ENCODE measurements at regions of chr13 and their contacts with region 1.

Region 1: DNA sequence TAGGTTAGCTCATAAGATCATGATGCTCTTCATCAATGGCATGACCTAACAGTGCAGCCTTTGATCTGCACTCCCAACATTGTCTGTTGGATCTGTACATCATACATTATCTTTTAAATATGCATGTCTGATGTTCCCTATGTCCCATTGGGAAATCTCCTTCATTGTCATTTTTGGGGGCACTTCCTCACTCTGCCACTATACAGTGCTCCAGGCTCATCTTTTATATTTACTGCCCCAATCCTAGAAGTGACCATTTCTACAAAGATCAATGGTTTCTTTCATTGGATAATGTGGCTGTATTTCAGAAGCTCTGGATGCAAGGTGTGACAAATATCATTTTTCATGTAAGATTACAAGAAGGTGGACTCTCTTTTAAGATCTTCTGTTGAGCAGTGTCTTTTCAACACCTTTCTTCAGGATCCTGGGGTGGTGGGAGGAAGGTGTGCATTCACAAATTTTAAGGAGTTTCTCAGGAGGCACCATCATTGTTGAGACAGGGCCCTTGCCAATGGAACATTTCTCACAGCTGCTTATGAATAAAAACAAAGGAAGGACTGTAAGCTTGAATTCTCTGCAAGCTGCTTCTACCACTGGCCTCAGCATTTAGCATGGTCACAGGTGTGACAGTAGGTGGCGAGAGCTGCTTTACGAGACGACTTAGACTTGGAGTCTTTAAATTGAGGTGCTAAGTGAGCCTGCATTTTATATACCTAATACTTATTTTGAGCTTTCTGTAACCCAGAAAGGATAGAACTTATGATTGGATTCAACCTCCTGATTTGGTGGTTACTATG is 403.0 kb downstream of the LMO7 start:
- DNase-seq: no peak
- H3K4me3 ChIP-seq: no peak overlapping the region
- H3K4me3 Mint-ChIP-seq: no peak overlapping the region
- H3K27ac Mint-ChIP-seq: no peak overlapping the region
- H3K4me1 ChIP-seq: peaks cover 16% of the 10 kb centered on the region
- H3K4me1 Mint-ChIP-seq: peaks cover 18% of the 10 kb centered on the region
- H3K27me3 ChIP-seq: no peaks in the 10 kb centered on the region
- H3K27me3 Mint-ChIP-seq: no peaks in the 10 kb centered on the region
- CTCF ChIP-seq: no peak

Region 2: GRCh38 chr13:76383676-76384461 is 344.8 kb after region 1 on chr13:
- CTCF ChIA-PET with region 1: no interaction called
- POLR2A ChIA-PET with region 1: no interaction called
- intact Hi-C with region 1: loop called (anchors 10 kb)
- DNase-seq: peak in 1 of 2 experiments; percentile 2
- H3K4me3 ChIP-seq: no peak overlapping the region
- H3K4me3 Mint-ChIP-seq: no peak overlapping the region
- H3K27ac Mint-ChIP-seq: no peak overlapping the region
- H3K4me1 ChIP-seq: no peaks in the 10 kb centered on the region
- H3K4me1 Mint-ChIP-seq: peaks cover 6% of the 10 kb centered on the region
- H3K27me3 ChIP-seq: no peaks in the 10 kb centered on the region
- H3K27me3 Mint-ChIP-seq: no peaks in the 10 kb centered on the region
- CTCF ChIP-seq: no peak

Measured in Caco-2 (cell line).